Psoas muscle (tissue), 8 donors: ENCODE measurements at regions of chr19 and their contacts with region 1.

Region 1: DNA sequence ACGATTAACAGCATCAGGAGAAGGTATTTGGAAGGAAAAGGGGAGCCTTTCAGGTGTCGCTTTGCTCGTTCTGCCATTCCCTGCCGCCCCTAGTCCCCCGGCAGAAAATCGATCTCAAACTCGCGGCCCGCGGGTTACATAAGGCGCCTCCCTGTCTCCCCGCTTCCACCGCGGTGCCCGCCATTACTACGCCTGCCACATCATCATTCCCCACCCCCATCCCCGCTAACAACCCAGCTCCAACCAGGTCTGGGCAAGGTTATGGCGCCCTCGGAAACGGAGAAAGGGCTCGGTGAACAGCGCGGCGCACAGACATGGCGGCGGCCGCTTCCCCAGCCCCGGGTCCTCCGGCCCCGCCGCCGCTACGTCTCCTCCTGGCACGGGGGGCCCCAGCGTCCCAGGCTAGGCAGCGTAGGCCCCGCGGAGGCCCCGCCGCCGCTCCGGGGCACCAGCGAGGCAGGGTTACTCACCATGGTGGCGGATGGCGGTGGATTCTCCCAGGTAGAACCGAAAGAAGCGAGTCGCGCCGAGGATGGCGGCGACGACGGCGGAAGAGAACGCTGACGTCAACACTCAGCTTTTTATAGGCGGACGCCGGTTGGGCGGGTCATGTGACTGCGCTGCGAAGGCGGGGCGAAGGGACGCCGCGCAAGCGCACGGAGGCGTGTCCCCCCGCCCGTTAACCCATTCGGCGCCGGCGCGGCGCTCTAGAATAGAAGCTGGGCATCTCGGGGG is at the start of gene EEF2:
- DNase-seq: peak; percentile 89 to 96
- ATAC-seq: peak; percentile 64 to 77 (median 70)
- H3K4me3 ChIP-seq: peak within 1 kb of the TSS; percentile 91
- H3K27ac ChIP-seq: peak within 1 kb of the TSS; percentile 95
- H3K4me1 ChIP-seq: peaks cover 44% of the 10 kb centered on the region
- H3K27me3 ChIP-seq: no peaks in the 10 kb centered on the region
- CTCF ChIP-seq: no peak
- total RNA-seq, gene EEF2: 2,332 to 3,628 (median 2,726) TPM

Region 2: GRCh38 chr19:3762501-3763459 is 222.3 kb before region 1 on chr19 and contains the start of gene MRPL54:
- intact Hi-C with region 1: loop called (anchors 5 kb)
- DNase-seq: peak; percentile 99 to 100
- ATAC-seq: peak; percentile 94 to 95 (median 95)
- H3K4me3 ChIP-seq: peak within 1 kb of the TSS; percentile 92
- H3K27ac ChIP-seq: peak within 1 kb of the TSS; percentile 97
- H3K4me1 ChIP-seq: peaks cover 9% of the 10 kb centered on the region
- H3K27me3 ChIP-seq: no peaks in the 10 kb centered on the region
- CTCF ChIP-seq: no peak
- total RNA-seq, gene MRPL54: 35.2 to 68.8 (median 49.7) TPM

Region 3: DNA sequence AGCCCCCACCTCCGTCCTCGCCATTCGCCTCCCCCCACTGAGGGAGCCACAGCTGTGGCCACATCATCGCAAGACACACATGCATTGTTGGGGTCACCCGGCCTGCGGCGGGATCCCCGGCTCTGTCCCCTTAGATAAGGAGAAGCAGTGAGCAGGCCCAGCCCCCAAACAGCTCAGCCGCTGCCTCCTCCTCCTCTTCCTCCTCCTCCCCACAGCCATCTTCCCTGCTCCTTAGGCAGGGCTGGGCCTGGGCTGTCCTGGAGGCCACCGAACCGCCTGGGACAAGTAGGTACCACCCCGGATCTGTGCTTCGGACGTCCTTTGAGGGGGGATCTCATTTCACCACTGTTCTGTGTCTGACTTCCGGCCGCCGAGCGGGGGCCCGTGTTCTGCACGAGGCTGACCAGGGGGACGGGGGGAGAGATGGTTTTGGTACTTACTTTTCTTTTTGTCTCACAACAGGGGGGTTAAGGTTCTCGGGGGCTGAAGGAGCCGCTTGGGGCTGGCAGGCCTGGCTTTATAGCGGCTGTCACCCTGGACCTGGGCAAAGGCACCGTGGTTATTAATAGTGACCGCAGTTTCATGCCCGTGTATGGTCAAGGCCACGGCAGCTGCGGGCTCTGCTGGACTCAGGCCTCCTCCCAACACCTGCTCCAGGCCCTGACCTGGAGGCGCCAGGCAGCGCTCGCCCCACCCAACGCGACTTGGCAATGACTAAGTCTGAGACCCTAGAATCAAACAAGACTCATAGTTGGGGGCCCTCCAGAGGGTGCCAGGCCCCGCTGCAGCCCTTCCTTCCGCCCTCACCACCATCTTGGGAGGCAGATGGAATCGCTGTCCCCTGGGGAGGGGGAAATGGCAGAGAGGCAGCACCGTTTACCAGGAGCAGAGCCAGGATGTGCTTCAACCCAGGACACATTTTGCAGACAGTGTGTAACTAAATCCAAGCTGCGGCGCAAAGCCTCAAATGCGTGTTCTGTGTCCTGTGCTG is 33.9 kb before region 1 on chr19:
- intact Hi-C with region 1: loop called in 1 of 2 experiments (anchors 2 kb)
- DNase-seq: peak; percentile 80 to 93
- ATAC-seq: peak; percentile 74 to 81 (median 77)
- H3K4me3 ChIP-seq: peak overlapping the region; percentile 84
- H3K27ac ChIP-seq: peak overlapping the region; percentile 99
- H3K4me1 ChIP-seq: peaks cover 42% of the 10 kb centered on the region
- H3K27me3 ChIP-seq: no peaks in the 10 kb centered on the region
- CTCF ChIP-seq: no peak

Region 4: DNA sequence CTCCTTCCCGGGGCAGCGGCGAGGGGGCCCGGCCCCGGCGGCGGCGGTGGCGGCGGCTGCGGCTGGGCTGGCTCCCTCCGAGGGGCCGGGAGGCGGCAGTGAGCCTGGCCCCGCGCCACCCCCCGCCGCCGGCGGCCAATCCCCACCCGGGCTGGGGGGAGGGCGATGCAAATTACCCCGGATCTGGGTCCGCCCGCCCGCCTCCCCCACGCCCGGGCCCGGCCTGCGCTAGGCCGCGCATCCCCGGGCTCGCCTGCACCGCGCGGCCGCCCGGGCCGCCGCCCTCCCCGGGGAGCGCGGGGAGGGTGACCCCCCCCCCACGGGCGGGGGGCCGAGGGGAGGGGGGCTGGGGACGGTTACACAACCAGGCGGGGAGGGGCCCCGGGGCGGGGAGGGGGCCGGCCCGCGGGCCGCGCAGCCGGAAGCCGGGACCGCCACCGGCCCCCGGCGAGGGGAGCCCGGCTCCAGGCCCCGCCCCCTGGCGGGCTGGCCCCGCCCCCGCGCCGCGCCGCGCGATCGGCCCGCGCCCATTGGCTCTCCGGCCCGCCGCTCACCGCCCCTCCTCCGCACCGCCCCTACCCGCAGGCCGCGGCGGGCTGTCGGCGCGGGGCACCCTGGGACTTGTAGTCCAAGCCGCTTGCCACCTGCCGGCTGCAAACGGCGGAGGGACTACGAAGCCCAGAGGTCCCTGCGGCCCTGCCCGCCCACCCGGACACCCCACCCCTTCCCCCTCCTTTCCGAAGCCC is 80.5 kb after region 1 on chr19:
- intact Hi-C with region 1: loop called in 1 of 2 experiments (anchors 5 kb)
- DNase-seq: peak; percentile 97 to 99
- ATAC-seq: peak; percentile 78 to 85 (median 83)
- H3K4me3 ChIP-seq: peak overlapping the region; percentile 87
- H3K27ac ChIP-seq: peak overlapping the region; percentile 96
- H3K4me1 ChIP-seq: peaks cover 36% of the 10 kb centered on the region
- H3K27me3 ChIP-seq: no peaks in the 10 kb centered on the region
- CTCF ChIP-seq: no peak

Region 5: GRCh38 chr19:4208385-4209094 is 223.5 kb after region 1 on chr19:
- intact Hi-C with region 1: loop called (anchors 1 to 10 kb)
- DNase-seq: no peak
- ATAC-seq: no peak
- H3K4me3 ChIP-seq: no peak overlapping the region
- H3K27ac ChIP-seq: no peak overlapping the region
- H3K4me1 ChIP-seq: peaks cover 3% of the 10 kb centered on the region
- H3K27me3 ChIP-seq: peaks cover 0 to 11% (median 3%) of the 10 kb centered on the region in 3 donors
- CTCF ChIP-seq: peak; percentile 13